HCT116 (cell line): ENCODE measurements at regions of chr2 and their contacts with region 1.

Region 1: GRCh38 chr2:25165992-25166875 is 2.1 kb downstream of the POMC start:
- DNase-seq: peak; percentile 35
- ATAC-seq: peak; percentile 100
- H3K4me3 ChIP-seq: no peak overlapping the region
- H3K27ac ChIP-seq: no peak overlapping the region
- H3K4me1 ChIP-seq: peaks cover 0 to 6% of the 10 kb centered on the region in 2 experiments; a peak in 1 of 4 replicates
- H3K27me3 ChIP-seq: no peaks in the 10 kb centered on the region
- CTCF ChIP-seq: peak; percentile 61 to 75 (median 70)
- POLR2A ChIP-seq: no peak
- RAD21 ChIP-seq: peak; percentile 90

Region 2: DNA sequence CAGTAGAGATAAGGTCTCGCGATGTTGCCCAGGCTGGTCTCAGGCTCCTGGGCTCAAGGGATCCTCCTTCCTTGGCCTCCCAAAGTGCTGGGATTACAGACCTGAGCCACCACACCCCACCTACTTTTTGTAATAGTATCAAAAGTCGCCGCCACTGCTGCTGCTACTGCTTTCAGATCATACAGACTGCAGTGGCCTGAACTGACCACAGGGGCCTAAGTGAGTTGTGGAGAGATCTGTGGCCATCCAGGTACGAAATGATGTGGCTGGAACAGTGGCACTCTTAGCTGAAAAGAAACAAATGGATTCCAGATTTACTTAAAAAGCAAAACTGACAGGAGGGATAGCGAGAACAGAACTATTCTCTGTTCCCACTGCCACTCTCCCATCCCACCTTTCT is 35.0 kb after region 1 on chr2:
- CTCF ChIA-PET with region 1: interaction called, 20 read pairs
- POLR2A ChIA-PET with region 1: no interaction called
- RAD21 ChIA-PET with region 1: interaction called in 1 of 2 experiments, 6 read pairs
- intact Hi-C with region 1: loop called (anchors 1 kb)
- DNase-seq: peak; percentile 16
- ATAC-seq: peak; percentile 85
- H3K4me3 ChIP-seq: no peak overlapping the region
- H3K27ac ChIP-seq: no peak overlapping the region
- H3K4me1 ChIP-seq: 0 out of 4 replicates have a peak, but pooled peaks cover 0 to 4% of the 10 kb centered on the region in 2 experiments
- H3K27me3 ChIP-seq: no peaks in the 10 kb centered on the region
- CTCF ChIP-seq: peak in 2 of 3 experiments; percentile 46 to 54; a peak in 4 of 6 replicates
- POLR2A ChIP-seq: no peak
- RAD21 ChIP-seq: no peak

Region 3: GRCh38 chr2:25228848-25229278 is 62.6 kb after region 1 on chr2:
- CTCF ChIA-PET with region 1: interaction called, 22 read pairs
- POLR2A ChIA-PET with region 1: interaction called, 4 read pairs
- RAD21 ChIA-PET with region 1: interaction called in 1 of 2 experiments, 5 read pairs
- intact Hi-C with region 1: loop called (anchors 2 kb)
- DNase-seq: peak; percentile 59
- ATAC-seq: peak; percentile 97
- H3K4me3 ChIP-seq: no peak overlapping the region
- H3K27ac ChIP-seq: no peak overlapping the region
- H3K4me1 ChIP-seq: peaks cover 0 to 8% of the 10 kb centered on the region in 2 experiments; a peak in 3 of 4 replicates
- H3K27me3 ChIP-seq: no peaks in the 10 kb centered on the region
- CTCF ChIP-seq: peak; percentile 59 to 84 (median 72)
- POLR2A ChIP-seq: no peak
- RAD21 ChIP-seq: peak; percentile 54

Region 4: DNA sequence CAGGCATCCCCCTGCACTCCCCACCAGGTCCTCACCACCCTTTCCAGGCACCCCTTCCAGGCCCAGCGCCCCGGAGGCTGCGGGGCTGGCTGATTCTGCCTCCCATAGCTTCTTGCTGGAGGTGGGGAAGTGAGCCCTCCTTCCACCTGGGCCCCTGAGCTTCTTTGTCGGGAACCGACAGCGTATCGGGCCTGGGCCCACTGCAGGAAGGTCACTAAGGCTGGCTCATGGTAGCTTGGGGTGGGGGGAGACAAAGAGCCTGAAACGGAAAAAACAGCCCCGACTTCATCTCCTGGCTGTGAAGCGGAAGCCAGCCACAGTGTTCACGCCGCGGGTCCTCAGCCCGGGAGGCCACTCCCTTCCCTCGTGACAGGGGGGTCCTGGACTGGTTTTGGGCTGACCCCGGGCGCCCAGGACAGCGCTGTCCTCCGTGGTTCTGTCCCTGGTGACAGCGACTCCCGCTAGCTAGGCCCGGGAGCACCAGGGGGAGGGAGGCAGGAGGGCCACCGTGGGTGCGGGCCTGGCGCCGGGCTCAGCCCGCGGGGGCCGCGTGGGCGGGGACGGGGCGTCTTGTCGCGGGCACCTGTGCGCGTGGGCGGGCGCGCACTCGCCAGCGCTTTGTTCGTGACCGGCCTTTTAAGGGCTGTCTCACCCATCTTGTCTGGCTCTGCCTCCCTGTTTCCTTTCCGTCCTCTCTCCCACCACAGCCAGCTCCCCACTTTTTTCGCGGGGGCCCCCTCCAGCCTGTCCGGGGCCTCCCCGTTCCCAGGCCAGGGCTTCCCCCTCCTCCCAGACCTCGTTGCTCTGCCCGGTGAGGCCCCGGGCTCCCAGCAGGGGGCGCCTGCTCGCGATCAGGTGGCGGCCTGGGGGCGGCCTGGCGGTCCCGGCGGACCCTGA is 110.6 kb after region 1 on chr2:
- CTCF ChIA-PET with region 1: no interaction called
- POLR2A ChIA-PET with region 1: no interaction called
- RAD21 ChIA-PET with region 1: no interaction called
- intact Hi-C with region 1: no loop called
- DNase-seq: no peak
- ATAC-seq: peak; percentile 78
- H3K4me3 ChIP-seq: no peak overlapping the region
- H3K27ac ChIP-seq: no peak overlapping the region
- H3K4me1 ChIP-seq: no peaks in the 10 kb centered on the region
- H3K27me3 ChIP-seq: no peaks in the 10 kb centered on the region
- CTCF ChIP-seq: peak in 2 of 3 experiments; percentile 53 to 69; a peak in 4 of 6 replicates
- POLR2A ChIP-seq: no peak
- RAD21 ChIP-seq: 0 out of 2 replicates have a peak, but pooled peaks have one; percentile 7

Region 5: GRCh38 chr2:25521665-25522387 is 355.6 kb after region 1 on chr2:
- CTCF ChIA-PET with region 1: no interaction called
- POLR2A ChIA-PET with region 1: no interaction called
- RAD21 ChIA-PET with region 1: no interaction called
- intact Hi-C with region 1: loop called (anchors 10 kb)
- DNase-seq: peak; percentile 35
- ATAC-seq: peak; percentile 84
- H3K4me3 ChIP-seq: no peak overlapping the region
- H3K27ac ChIP-seq: no peak overlapping the region
- H3K4me1 ChIP-seq: 0 out of 4 replicates have a peak, but pooled peaks cover 0 to 1% of the 10 kb centered on the region in 2 experiments
- H3K27me3 ChIP-seq: no peaks in the 10 kb centered on the region
- CTCF ChIP-seq: peak; percentile 69 to 85 (median 71); a peak in 5 of 6 replicates
- POLR2A ChIP-seq: no peak
- RAD21 ChIP-seq: peak; percentile 79